CD4-positive, alpha-beta T cell (primary cell): ENCODE measurements at regions of chrX and their contacts with region 1.

Region 1: DNA sequence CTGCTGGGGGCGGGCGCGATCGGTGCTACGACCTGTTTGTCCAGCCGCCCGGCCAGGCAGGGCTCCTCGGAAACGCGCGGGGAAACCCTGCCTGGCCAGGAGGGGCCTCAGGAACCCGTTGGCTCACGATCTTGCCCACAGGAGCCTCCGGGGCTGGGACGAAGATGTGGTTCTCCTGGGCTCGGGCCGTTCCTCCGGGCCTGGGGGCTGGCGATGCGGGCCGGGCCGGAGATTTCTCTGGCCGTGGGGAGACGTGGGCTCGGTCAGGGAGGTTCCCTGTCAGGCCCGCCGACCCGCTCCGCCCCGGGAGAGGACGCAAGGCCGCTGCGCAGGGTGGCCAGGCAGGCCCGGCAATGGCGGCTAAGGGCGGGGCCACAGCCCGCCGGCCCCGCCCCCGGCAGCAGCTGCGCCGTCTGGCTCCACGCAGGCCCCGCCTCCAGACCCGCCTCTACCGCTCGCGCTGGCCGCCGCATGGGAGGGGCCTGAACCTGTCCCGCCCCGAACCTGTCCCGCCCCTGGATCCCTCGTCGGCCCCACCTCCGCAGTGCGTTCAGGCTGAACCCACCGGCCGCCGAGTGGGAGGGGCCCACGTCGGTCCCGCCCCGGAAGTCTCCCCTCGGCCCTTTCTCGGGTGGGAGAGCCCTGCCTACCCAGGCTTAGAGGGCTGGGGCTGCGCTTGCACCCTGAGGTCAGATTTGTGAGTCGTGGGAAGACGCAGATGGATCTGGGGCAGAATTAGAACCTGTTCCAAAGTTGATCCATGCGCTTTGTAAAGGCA is at the start of gene FAM3A:
- DNase-seq: peak; percentile 88 to 95 (median 92)
- ATAC-seq: peak; percentile 95
- H3K4me3 ChIP-seq: peak within 1 kb of the TSS; percentile 78
- H3K4me3 Mint-ChIP-seq: peak within 1 kb of the TSS; percentile 89
- H3K27ac ChIP-seq: peak within 1 kb of the TSS; percentile 41 to 76
- H3K27ac Mint-ChIP-seq: peak within 1 kb of the TSS; percentile 91
- H3K4me1 ChIP-seq: peaks cover 45% of the 10 kb centered on the region
- H3K4me1 Mint-ChIP-seq: peaks cover 23% of the 10 kb centered on the region
- H3K27me3 ChIP-seq: no peaks in the 10 kb centered on the region
- H3K27me3 Mint-ChIP-seq: no peaks in the 10 kb centered on the region
- CTCF ChIP-seq: no peak
- total RNA-seq, gene FAM3A: 36.1 to 38.2 TPM

Region 2: GRCh38 chrX:154478728-154479622 is 37.1 kb before region 1 on chrX and contains the start of gene LAGE3:
- CTCF ChIA-PET with region 1: no interaction called
- POLR2A ChIA-PET with region 1: interaction called, 7 read pairs
- intact Hi-C with region 1: loop called in 1 of 2 experiments (anchors 5 kb)
- DNase-seq: peak; percentile 86 to 96 (median 92)
- ATAC-seq: peak; percentile 90
- H3K4me3 ChIP-seq: peak within 1 kb of the TSS; percentile 56
- H3K4me3 Mint-ChIP-seq: peak within 1 kb of the TSS; percentile 85
- H3K27ac ChIP-seq: peak within 1 kb of the TSS; percentile 72 to 74
- H3K27ac Mint-ChIP-seq: peak within 1 kb of the TSS; percentile 90
- H3K4me1 ChIP-seq: peaks cover 28% of the 10 kb centered on the region
- H3K4me1 Mint-ChIP-seq: peaks cover 26% of the 10 kb centered on the region
- H3K27me3 ChIP-seq: no peaks in the 10 kb centered on the region
- H3K27me3 Mint-ChIP-seq: no peaks in the 10 kb centered on the region
- CTCF ChIP-seq: no peak
- total RNA-seq, gene LAGE3: 5.7 to 6.6 TPM

Region 3: DNA sequence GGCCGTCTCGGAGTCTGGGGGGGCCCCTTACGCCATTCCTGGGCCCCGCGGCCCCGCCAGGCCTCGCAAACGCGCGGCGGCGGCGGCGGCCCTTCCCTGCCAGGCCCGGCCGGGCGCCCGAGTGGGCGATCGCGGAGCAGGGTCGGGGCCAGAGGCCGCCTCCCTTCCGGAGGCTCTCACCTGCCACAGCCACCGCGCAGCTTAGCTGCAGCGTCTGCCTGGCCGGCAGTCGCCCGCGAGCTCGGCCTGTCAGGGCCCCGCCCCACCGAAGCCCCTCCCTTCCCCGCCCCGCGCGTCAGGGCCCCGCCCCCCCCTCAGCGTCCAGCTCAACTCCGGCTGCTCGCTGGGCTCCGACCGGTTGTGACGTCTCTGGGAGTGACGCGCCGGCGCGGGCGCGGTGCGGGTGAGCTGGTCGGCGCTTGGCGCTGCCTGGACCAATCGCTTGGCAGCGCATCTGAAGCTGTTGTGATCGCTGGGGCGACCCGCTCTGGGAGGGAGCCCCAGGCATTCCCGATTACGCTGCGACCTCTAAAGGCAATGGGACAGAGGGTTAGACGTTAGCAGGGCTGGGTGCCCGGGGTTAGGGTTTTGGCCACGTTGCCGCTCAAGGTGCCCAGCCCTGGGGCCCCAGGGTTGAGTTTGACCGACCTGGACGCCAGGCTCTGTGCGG is 25.5 kb before region 1 on chrX and contains the start of gene SLC10A3:
- CTCF ChIA-PET with region 1: no interaction called
- POLR2A ChIA-PET with region 1: interaction called, 35 read pairs
- intact Hi-C with region 1: loop called in 1 of 2 experiments (anchors 2 kb)
- DNase-seq: peak; percentile 68 to 95 (median 84)
- ATAC-seq: peak; percentile 78
- H3K4me3 ChIP-seq: peak within 1 kb of the TSS; percentile 72
- H3K4me3 Mint-ChIP-seq: peak within 1 kb of the TSS; percentile 91
- H3K27ac ChIP-seq: peak within 1 kb of the TSS; percentile 53 to 88
- H3K27ac Mint-ChIP-seq: peak within 1 kb of the TSS; percentile 95
- H3K4me1 ChIP-seq: peaks cover 38% of the 10 kb centered on the region
- H3K4me1 Mint-ChIP-seq: peaks cover 11% of the 10 kb centered on the region
- H3K27me3 ChIP-seq: no peaks in the 10 kb centered on the region
- H3K27me3 Mint-ChIP-seq: no peaks in the 10 kb centered on the region
- CTCF ChIP-seq: no peak
- total RNA-seq, gene SLC10A3: 15.7 to 16.4 TPM

Region 4: GRCh38 chrX:154526901-154527675 is 11.0 kb after region 1 on chrX:
- CTCF ChIA-PET with region 1: interaction called, 8 read pairs
- POLR2A ChIA-PET with region 1: interaction called, 21 read pairs
- intact Hi-C with region 1: loop called in 1 of 2 experiments (anchors 2 kb)
- DNase-seq: peak; percentile 36 to 77 (median 54)
- ATAC-seq: peak; percentile 93
- H3K4me3 ChIP-seq: peak overlapping the region; percentile 5
- H3K4me3 Mint-ChIP-seq: no peak overlapping the region
- H3K27ac ChIP-seq: no peak overlapping the region
- H3K27ac Mint-ChIP-seq: peak overlapping the region; percentile 51
- H3K4me1 ChIP-seq: peaks cover 24% of the 10 kb centered on the region
- H3K4me1 Mint-ChIP-seq: peaks cover 22% of the 10 kb centered on the region
- H3K27me3 ChIP-seq: no peaks in the 10 kb centered on the region
- H3K27me3 Mint-ChIP-seq: no peaks in the 10 kb centered on the region
- CTCF ChIP-seq: no peak

Region 5: DNA sequence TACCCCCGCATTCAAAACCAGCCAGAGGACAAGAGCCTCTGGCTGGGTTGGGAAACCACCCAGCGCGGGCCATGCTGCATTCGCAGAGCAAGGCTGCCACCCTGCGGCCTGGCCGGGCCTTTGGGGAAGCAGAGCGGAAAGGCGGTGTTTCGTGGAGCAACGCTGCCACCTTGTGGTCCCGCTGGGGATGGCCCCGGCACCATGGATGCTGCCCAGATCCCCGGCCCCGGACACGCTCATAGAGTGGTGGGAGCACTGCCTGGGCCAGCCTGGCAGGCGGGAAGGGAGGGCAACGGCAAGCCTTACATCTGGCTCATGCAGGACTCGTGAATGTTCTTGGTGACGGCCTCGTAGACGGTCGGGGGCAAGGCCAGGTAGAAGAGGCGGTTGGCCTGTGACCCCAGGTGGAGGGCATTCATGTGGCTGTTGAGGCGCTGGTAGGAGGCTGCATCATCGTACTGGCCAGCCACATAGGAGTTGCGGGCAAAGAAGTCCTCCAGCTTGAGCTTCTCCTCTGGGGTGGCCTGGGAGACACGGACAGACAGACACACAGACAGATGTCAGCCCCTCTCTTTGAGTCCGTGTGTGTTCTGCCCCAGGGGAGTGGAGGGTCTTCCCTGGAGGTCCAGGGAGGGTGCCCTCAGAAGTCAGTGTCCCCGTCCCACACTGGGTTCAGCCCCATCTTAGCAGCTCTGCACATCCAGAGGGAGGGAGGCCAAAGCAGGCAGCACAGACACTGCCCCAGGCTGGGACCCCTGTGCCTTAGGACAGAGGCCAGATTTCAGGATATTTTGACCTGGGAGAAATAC is 19.0 kb after region 1 on chrX:
- CTCF ChIA-PET with region 1: no interaction called
- POLR2A ChIA-PET with region 1: interaction called, 3 read pairs
- intact Hi-C with region 1: loop called in 1 of 2 experiments (anchors 2 kb)
- DNase-seq: peak; percentile 79 to 94 (median 88)
- ATAC-seq: peak; percentile 97
- H3K4me3 ChIP-seq: no peak overlapping the region
- H3K4me3 Mint-ChIP-seq: no peak overlapping the region
- H3K27ac ChIP-seq: no peak overlapping the region
- H3K27ac Mint-ChIP-seq: peak overlapping the region; percentile 51
- H3K4me1 ChIP-seq: peaks cover 9% of the 10 kb centered on the region
- H3K4me1 Mint-ChIP-seq: peaks cover 11% of the 10 kb centered on the region
- H3K27me3 ChIP-seq: no peaks in the 10 kb centered on the region
- H3K27me3 Mint-ChIP-seq: no peaks in the 10 kb centered on the region
- CTCF ChIP-seq: peak; percentile 97